Right ventricle myocardium inferior (tissue), 1 donor: ENCODE measurements at regions of chr2 and their contacts with region 1.

Region 1: DNA sequence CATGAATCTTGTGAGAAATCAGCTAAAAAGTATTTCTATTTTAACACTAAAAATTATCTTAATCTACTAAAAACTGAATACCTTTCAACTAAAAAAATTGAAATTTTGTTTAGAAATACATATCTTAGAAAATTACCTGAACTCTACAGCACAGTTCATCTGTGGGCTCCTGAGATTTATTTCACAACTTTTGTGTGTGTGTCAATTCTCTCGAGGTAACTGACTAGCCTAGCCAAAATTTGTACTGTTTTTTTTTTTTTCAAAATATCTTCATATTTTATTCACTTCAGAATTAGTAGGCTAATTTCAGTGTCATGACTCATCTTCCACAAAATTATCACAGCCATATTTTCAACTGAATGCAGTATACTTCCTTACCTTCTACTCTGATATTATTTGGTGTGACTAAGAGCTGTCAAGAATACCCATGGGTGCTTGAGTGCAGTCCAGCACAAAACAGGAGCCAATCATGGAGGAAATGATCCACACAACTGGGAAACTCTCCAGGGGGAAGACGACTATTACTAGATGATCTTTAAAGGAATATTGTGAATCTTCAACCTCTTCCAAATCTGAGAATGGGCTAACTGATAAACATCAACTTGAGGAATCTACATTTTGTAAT is 174.6 kb downstream of the ZNF385B start:
- DNase-seq: no peak
- ATAC-seq: no peak

Region 2: GRCh38 chr2:179720173-179720772 is 33.4 kb after region 1 on chr2:
- intact Hi-C with region 1: loop called (anchors 5 kb)
- DNase-seq: no peak
- ATAC-seq: no peak